T-cell (primary cell): ENCODE measurements at regions of chr1 and their contacts with region 1.

Region 1: GRCh38 chr1:100400404-100400803 is 48.1 kb downstream of the CDC14A start:
- DNase-seq: peak; percentile 38 to 86 (median 70)
- ATAC-seq: peak; percentile 88 to 95 (median 91)
- H3K4me3 ChIP-seq: peak overlapping the region in 1 of 2 donors; percentile 1
- H3K4me3 Mint-ChIP-seq: peak overlapping the region; percentile 60 to 72 (median 68)
- H3K27ac ChIP-seq: peak overlapping the region; percentile 75
- H3K27ac Mint-ChIP-seq: peak overlapping the region; percentile 92 to 95
- H3K4me1 ChIP-seq: peaks cover 58 to 76% of the 10 kb centered on the region in 2 experiments
- H3K4me1 Mint-ChIP-seq: peaks cover 86 to 96% (median 86%) of the 10 kb centered on the region in 3 donors
- H3K27me3 ChIP-seq: no peaks in the 10 kb centered on the region
- H3K27me3 Mint-ChIP-seq: no peaks in the 10 kb centered on the region

Region 2: DNA sequence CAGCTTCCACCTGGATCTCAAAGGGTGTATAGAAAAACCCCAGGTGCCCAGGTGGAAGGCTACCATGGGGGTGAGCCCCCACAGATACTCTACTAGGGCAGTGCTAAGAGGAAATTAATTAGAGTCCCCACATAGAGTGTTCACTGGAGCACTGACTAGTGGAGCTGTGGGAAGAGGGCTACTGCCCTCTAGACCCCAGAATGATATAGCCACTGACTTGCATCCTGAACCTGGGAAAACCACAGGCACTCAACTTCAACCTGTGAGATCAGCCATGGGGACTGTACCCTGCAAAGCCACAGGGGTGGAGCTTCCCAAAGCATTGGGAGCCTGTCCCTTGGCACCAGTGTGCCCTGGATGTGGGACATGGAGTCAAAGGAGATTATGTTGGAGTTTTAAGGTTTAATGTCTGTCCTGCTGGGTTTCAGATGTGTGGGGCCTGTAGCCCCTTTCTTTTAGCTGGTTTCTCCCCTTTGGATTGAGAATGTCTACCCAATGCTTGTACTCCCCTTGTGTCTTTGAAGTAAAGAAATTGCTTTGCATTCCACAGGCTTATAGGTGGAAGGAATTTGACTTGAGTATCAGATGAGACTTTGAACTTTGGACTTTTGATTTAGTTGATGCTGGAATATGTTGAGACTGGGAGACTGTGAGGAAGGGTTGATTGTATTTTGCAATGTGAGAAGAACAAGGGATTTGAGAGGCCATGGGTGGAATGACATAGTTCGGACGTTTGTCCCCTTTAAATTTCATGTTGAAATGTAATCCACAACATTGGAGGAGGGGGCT is 79.9 kb before region 1 on chr1:
- CTCF ChIA-PET with region 1: no interaction called
- POLR2A ChIA-PET with region 1: no interaction called
- DNase-seq: no peak
- ATAC-seq: no peak
- H3K4me3 ChIP-seq: no peak overlapping the region
- H3K4me3 Mint-ChIP-seq: no peak overlapping the region
- H3K27ac ChIP-seq: no peak overlapping the region
- H3K27ac Mint-ChIP-seq: no peak overlapping the region
- H3K4me1 ChIP-seq: no peaks in the 10 kb centered on the region
- H3K4me1 Mint-ChIP-seq: no peaks in the 10 kb centered on the region
- H3K27me3 ChIP-seq: peaks cover 0 to 4% of the 10 kb centered on the region in 2 experiments
- H3K27me3 Mint-ChIP-seq: no peaks in the 10 kb centered on the region

Region 3: DNA sequence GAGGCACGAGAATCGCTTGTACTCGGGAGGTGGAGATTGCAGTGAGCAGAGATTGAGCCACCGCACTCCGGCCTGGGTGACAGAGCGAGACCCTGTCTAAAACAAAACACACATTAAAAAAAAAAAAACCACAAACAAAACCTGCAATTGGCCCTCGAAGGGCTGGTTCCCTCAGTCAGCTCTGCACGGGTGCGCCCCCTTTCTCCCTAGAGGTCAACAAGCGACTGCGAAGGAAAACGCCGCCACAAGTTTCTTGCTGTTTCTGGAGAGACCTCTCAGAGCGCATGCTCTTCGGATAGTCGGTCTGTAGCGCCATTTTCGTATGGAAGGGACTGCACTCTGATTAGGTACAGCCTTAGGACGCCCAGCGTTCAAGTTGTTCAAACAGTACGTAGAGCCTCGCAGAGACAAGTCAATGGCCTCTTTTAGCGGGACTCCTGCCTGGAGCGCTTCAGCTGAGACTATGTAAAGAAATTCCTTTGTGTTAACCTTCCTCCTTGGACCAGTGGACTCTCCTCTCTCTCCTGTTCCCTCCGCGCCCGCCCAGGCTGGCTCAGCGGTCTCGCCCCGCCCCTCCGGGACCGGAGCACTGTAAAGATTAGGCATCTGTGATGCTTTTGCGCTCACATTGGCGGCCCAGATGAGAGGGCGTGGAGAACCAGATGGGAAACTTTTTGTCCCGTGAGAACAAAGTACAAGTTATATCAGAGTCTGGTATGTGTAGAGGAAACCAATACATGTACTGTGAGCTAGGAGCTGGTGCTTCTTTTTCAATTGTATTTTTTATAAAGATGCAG is 49.1 kb before region 1 on chr1:
- CTCF ChIA-PET with region 1: interaction called in 1 of 2 experiments, 11 read pairs
- POLR2A ChIA-PET with region 1: interaction called, 8 to 12 read pairs
- DNase-seq: peak; percentile 71 to 92 (median 85)
- ATAC-seq: peak; percentile 66 to 79 (median 70)
- H3K4me3 ChIP-seq: peak overlapping the region; percentile 67 to 96
- H3K4me3 Mint-ChIP-seq: peak overlapping the region; percentile 90 to 100 (median 96)
- H3K27ac ChIP-seq: peak overlapping the region; percentile 87
- H3K27ac Mint-ChIP-seq: peak overlapping the region; percentile 95 to 98
- H3K4me1 ChIP-seq: peaks cover 16 to 22% of the 10 kb centered on the region in 2 experiments
- H3K4me1 Mint-ChIP-seq: peaks cover 27 to 39% (median 30%) of the 10 kb centered on the region in 3 donors
- H3K27me3 ChIP-seq: no peaks in the 10 kb centered on the region
- H3K27me3 Mint-ChIP-seq: no peaks in the 10 kb centered on the region

Region 4: GRCh38 chr1:100387209-100387608 is 13.2 kb before region 1 on chr1:
- CTCF ChIA-PET with region 1: interaction called, 3 to 10 read pairs
- POLR2A ChIA-PET with region 1: interaction called, 5 to 9 read pairs
- DNase-seq: no peak
- ATAC-seq: no peak
- H3K4me3 ChIP-seq: peak overlapping the region in 1 of 2 donors; percentile 16
- H3K4me3 Mint-ChIP-seq: peak overlapping the region; percentile 63 to 67 (median 66)
- H3K27ac ChIP-seq: peak overlapping the region; percentile 78
- H3K27ac Mint-ChIP-seq: peak overlapping the region; percentile 82 to 94
- H3K4me1 ChIP-seq: peaks cover 46 to 54% of the 10 kb centered on the region in 2 experiments
- H3K4me1 Mint-ChIP-seq: peaks cover 89 to 95% (median 90%) of the 10 kb centered on the region in 3 donors
- H3K27me3 ChIP-seq: no peaks in the 10 kb centered on the region
- H3K27me3 Mint-ChIP-seq: no peaks in the 10 kb centered on the region

Region 5: DNA sequence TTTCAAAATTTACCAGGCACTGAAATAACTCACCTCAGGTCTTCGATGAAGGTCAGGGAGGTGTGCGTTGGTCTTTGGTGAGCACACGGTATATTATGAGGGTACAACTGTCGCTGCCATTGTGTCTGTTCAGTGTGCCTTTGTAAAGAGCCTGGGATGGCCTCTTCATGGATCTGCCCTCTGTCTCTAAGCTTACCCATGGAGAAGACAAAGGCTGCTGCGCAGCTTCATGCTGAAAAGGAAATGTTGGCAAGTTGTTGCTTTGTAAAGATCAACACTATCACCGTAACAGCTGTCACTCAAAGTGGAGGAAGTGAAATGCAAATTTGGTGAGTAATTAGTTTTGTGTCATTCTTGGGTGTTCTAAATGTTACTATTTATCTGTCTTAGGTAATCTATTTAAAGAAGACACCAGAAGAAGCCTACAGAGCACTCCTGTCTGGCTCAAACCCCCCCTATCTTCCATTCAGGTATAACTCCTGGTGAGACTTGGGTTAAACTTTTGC is 23.5 kb after region 1 on chr1:
- CTCF ChIA-PET with region 1: interaction called, 3 to 12 read pairs
- POLR2A ChIA-PET with region 1: interaction called, 7 to 10 read pairs
- DNase-seq: peak in 17 of 35 experiments; percentile 6 to 56 (median 20)
- ATAC-seq: peak; percentile 69 to 76 (median 74)
- H3K4me3 ChIP-seq: peak overlapping the region in 1 of 2 donors; percentile 35
- H3K4me3 Mint-ChIP-seq: peak overlapping the region; percentile 80 to 89 (median 82)
- H3K27ac ChIP-seq: peak overlapping the region; percentile 71
- H3K27ac Mint-ChIP-seq: peak overlapping the region; percentile 97 to 98
- H3K4me1 ChIP-seq: peaks cover 28 to 30% of the 10 kb centered on the region in 2 experiments
- H3K4me1 Mint-ChIP-seq: peaks cover 61 to 82% (median 81%) of the 10 kb centered on the region in 3 donors
- H3K27me3 ChIP-seq: no peaks in the 10 kb centered on the region
- H3K27me3 Mint-ChIP-seq: no peaks in the 10 kb centered on the region

Region 6: GRCh38 chr1:100433563-100433962 is 33.2 kb after region 1 on chr1:
- CTCF ChIA-PET with region 1: interaction called, 4 to 13 read pairs
- POLR2A ChIA-PET with region 1: interaction called in 1 of 2 experiments, 3 read pairs
- DNase-seq: no peak
- ATAC-seq: no peak
- H3K4me3 ChIP-seq: no peak overlapping the region
- H3K4me3 Mint-ChIP-seq: no peak overlapping the region
- H3K27ac ChIP-seq: peak overlapping the region; percentile 38
- H3K27ac Mint-ChIP-seq: peak overlapping the region; percentile 86 to 91
- H3K4me1 ChIP-seq: peaks cover 29 to 36% of the 10 kb centered on the region in 2 experiments
- H3K4me1 Mint-ChIP-seq: peaks cover 69 to 75% (median 74%) of the 10 kb centered on the region in 3 donors
- H3K27me3 ChIP-seq: no peaks in the 10 kb centered on the region
- H3K27me3 Mint-ChIP-seq: no peaks in the 10 kb centered on the region

Region 7: GRCh38 chr1:100443811-100444571 is 43.6 kb after region 1 on chr1:
- CTCF ChIA-PET with region 1: interaction called, 3 to 8 read pairs
- POLR2A ChIA-PET with region 1: interaction called, 3 to 10 read pairs
- DNase-seq: peak in 7 of 35 experiments; percentile 3 to 66 (median 18)
- ATAC-seq: peak; percentile 4 to 29 (median 27)
- H3K4me3 ChIP-seq: no peak overlapping the region
- H3K4me3 Mint-ChIP-seq: peak overlapping the region; percentile 46 to 75 (median 67)
- H3K27ac ChIP-seq: peak overlapping the region; percentile 97
- H3K27ac Mint-ChIP-seq: peak overlapping the region; percentile 95 to 98
- H3K4me1 ChIP-seq: peaks cover 56 to 80% of the 10 kb centered on the region in 2 experiments
- H3K4me1 Mint-ChIP-seq: peaks cover 85 to 89% (median 88%) of the 10 kb centered on the region in 3 donors
- H3K27me3 ChIP-seq: no peaks in the 10 kb centered on the region
- H3K27me3 Mint-ChIP-seq: no peaks in the 10 kb centered on the region